Calu3 (cell line): ENCODE measurements at regions of chr4 and their contacts with region 1.

Region 1: GRCh38 chr4:24063731-24064130 is 173.9 kb upstream of the PPARGC1A start:
- DNase-seq: no peak
- H3K4me3 Mint-ChIP-seq: no peak overlapping the region
- H3K27ac Mint-ChIP-seq: no peak overlapping the region
- H3K4me1 Mint-ChIP-seq: peaks cover 15% of the 10 kb centered on the region
- H3K27me3 Mint-ChIP-seq: no peaks in the 10 kb centered on the region
- CTCF ChIP-seq: no peak

Region 2: GRCh38 chr4:24131954-24132673 is 68.4 kb after region 1 on chr4:
- CTCF ChIA-PET with region 1: no interaction called
- intact Hi-C with region 1: no loop called
- DNase-seq: no peak
- H3K4me3 Mint-ChIP-seq: no peak overlapping the region
- H3K27ac Mint-ChIP-seq: no peak overlapping the region
- H3K4me1 Mint-ChIP-seq: no peaks in the 10 kb centered on the region
- H3K27me3 Mint-ChIP-seq: peaks cover 14% of the 10 kb centered on the region
- CTCF ChIP-seq: no peak

Region 3: GRCh38 chr4:25884031-25884782 is 1820.5 kb after region 1 on chr4:
- CTCF ChIA-PET with region 1: interaction called, 13 read pairs
- intact Hi-C with region 1: no loop called
- DNase-seq: no peak
- H3K4me3 Mint-ChIP-seq: no peak overlapping the region
- H3K27ac Mint-ChIP-seq: no peak overlapping the region
- H3K4me1 Mint-ChIP-seq: peaks cover 20% of the 10 kb centered on the region
- H3K27me3 Mint-ChIP-seq: no peaks in the 10 kb centered on the region
- CTCF ChIP-seq: no peak